ENCODE measurements at regions of chr16 and their contacts with region 1.

Region 1: DNA sequence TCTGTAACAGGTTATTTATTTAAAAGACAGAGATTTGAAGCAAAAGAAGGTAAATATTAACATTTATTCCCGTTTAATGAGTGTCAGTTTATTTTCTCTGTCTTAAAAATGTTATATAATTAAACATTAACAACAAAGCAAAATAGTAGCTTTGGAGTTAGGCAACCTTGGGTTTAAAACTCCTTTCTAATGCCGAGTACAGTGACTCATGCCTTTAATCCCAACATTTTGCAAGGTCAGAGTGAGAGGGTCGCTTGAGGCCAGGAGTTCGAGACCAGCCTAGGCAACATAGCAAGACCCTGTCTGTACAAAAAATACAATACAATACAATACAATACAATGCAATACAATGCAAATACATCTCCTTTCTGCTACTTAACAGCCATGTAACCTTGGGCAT is 128.7 kb downstream of the CHD9 start:
- DNase-seq: no peak
- ATAC-seq: no peak
- H3K4me3 Mint-ChIP-seq: no peak overlapping the region
- H3K27ac Mint-ChIP-seq: no peak overlapping the region
- H3K4me1 Mint-ChIP-seq: peaks cover 11% of the 10 kb centered on the region
- H3K27me3 Mint-ChIP-seq: no peaks in the 10 kb centered on the region
- CTCF ChIP-seq: no peak

Region 2: DNA sequence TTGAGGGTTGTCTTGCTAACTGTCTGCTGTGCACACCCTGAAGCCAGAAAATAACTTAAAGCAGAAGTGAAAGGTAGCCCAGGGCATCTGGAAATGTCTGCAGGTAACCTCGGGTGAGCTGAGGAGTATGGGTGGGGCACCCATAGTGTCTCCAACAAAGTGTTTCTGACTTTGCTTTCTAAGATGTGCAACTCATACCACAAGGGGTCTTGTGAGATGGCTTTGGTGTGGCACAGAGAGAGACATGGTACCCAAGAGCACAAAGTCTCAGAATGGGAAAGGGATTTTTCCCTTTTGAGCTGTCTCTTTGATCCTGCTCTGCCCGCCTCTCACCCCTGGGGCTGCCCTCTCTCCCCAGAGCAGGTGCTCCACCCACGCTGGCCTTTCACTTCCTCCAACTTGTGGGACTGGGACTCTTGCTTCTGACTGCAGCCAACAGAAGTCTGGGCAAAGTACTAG is 121.7 kb before region 1 on chr16:
- CTCF ChIA-PET with region 1: no interaction called
- POLR2A ChIA-PET with region 1: no interaction called
- intact Hi-C with region 1: no loop called
- DNase-seq: peak; percentile 65
- ATAC-seq: peak; percentile 82
- H3K4me3 Mint-ChIP-seq: peak overlapping the region; percentile 65
- H3K27ac Mint-ChIP-seq: peak overlapping the region; percentile 82
- H3K4me1 Mint-ChIP-seq: peaks cover 88% of the 10 kb centered on the region
- H3K27me3 Mint-ChIP-seq: no peaks in the 10 kb centered on the region
- CTCF ChIP-seq: no peak

Region 3: GRCh38 chr16:53159781-53160436 is 23.5 kb before region 1 on chr16:
- CTCF ChIA-PET with region 1: interaction called, 3 read pairs
- POLR2A ChIA-PET with region 1: no interaction called
- intact Hi-C with region 1: loop called (anchors 2 kb)
- DNase-seq: no peak
- ATAC-seq: peak; percentile 81
- H3K4me3 Mint-ChIP-seq: no peak overlapping the region
- H3K27ac Mint-ChIP-seq: peak overlapping the region; percentile 18
- H3K4me1 Mint-ChIP-seq: peaks cover 4% of the 10 kb centered on the region
- H3K27me3 Mint-ChIP-seq: no peaks in the 10 kb centered on the region
- CTCF ChIP-seq: peak; percentile 88

Measured in activated B cell treated with CpG ODN at 0.5 μM for 24 hours (primary cell).